Thyroid gland (tissue), 4 donors: ENCODE measurements at regions of chr9 and their contacts with region 1.

Region 1: GRCh38 chr9:15104826-15105420 is 194.7 kb upstream of the FREM1 start:
- DNase-seq: peak; percentile 17 to 43
- H3K4me3 ChIP-seq: no peak overlapping the region
- H3K27ac ChIP-seq: no peak overlapping the region
- H3K4me1 ChIP-seq: no peaks in the 10 kb centered on the region
- H3K27me3 ChIP-seq: no peaks in the 10 kb centered on the region
- CTCF ChIP-seq: peak; percentile 44 to 91 (median 84)
- POLR2A ChIP-seq: no peak

Region 2: DNA sequence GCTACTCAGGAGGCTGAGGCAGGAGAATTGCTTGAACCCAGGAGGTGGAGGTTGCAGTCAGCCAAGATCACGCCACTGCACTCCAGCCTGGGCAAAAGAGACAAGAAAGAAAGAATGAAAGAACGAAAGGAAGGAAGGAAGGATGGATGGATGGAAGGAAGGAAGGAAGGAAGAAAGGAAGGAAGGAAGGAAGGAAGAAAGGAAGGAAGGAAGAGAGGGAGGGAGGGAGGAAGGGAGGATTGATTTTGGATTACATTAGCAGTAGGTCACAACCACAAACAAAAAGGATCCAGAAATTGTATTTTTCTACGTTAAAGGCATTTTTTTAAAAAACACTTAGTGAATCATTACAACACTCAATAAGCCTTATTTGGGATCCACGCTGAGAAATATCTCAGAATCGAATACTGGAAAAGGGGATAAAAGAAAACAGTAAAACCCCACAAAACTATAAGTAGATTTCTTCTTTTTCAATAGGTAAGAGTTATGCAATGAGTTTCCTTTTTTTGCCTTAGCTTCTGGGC is 57.8 kb before region 1 on chr9:
- intact Hi-C with region 1: no loop called
- DNase-seq: no peak
- H3K4me3 ChIP-seq: no peak overlapping the region
- H3K27ac ChIP-seq: no peak overlapping the region
- H3K4me1 ChIP-seq: no peaks in the 10 kb centered on the region
- H3K27me3 ChIP-seq: no peaks in the 10 kb centered on the region
- CTCF ChIP-seq: no peak
- POLR2A ChIP-seq: no peak

Region 3: DNA sequence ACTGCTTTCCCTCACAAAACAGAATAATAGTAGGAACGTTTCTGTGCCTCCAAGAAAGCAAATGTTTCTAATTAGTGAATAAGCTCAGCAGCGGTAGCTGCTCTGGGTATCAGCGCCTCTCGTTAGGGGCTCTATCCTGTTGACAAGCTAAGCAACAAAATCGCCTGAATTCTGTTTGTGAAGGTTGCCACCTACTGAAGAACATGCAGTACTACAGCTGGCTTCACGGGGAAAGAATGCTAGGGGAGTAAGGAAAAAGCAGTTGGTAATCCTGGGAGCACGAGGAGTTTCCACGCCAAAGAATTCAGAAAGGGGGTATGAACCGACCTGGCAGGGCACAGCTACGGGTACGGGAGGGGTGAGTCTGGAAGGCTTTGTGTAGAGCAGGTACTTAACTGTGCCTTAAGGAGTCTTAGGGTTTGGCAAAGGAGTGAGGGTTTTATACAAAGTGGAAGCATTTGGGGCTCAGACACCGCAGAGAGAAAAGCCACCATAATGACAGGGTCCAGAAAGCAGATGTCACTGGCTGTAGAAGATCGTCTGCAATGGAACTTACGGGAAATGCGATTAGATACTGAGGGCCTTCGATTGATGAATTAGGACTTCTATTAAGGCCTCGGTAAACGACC is 30.4 kb after region 1 on chr9:
- intact Hi-C with region 1: loop called (anchors 5 kb)
- DNase-seq: peak; percentile 53 to 63
- H3K4me3 ChIP-seq: no peak overlapping the region
- H3K27ac ChIP-seq: no peak overlapping the region
- H3K4me1 ChIP-seq: peaks cover 0 to 11% of the 10 kb centered on the region in 2 donors
- H3K27me3 ChIP-seq: no peaks in the 10 kb centered on the region
- CTCF ChIP-seq: peak; percentile 77 to 94 (median 88)
- POLR2A ChIP-seq: no peak